Endothelial cell of umbilical vein (primary cell): ENCODE measurements at regions of chr12 and their contacts with region 1.

Region 1: GRCh38 chr12:92539113-92539749 is 163.6 kb upstream of the PLEKHG7 start:
- DNase-seq: peak; percentile 95
- H3K4me3 ChIP-seq: no peak overlapping the region
- H3K27ac ChIP-seq: peak overlapping the region; percentile 70
- H3K4me1 ChIP-seq: peaks cover 32% of the 10 kb centered on the region
- H3K27me3 ChIP-seq: no peaks in the 10 kb centered on the region
- CTCF ChIP-seq: no peak
- POLR2A ChIP-seq: no peak

Region 2: DNA sequence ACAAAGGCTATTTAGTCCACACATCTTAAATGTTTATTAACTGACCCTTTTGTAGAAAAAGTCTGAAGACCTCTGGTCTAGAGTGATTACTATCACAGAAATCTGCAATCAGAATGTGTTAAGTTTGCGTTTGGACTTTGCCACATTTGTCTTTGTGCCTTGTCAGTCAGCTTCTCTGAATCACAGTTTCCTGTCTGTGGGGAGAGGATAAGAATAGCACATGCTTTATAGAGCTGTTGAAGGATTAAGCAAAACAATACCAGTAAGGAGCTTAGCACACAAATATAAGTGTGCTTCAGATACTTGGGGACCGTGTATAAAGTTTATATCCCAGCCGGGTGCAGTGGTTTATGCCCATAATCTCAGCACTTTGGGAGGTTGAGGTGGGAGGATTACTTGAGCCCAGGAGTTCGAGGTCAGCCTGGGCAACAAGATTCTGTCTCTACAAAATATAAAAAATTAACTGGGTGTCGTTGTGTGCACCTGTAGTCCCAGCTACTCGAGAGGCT is 330.6 kb before region 1 on chr12:
- CTCF ChIA-PET with region 1: no interaction called
- POLR2A ChIA-PET with region 1: no interaction called
- dilution Hi-C with region 1: no loop called
- intact Hi-C with region 1: loop called (anchors 1 kb)
- DNase-seq: peak; percentile 97
- H3K4me3 ChIP-seq: peak overlapping the region in 1 of 3 experiments; percentile 47
- H3K27ac ChIP-seq: peak overlapping the region; percentile 82
- H3K4me1 ChIP-seq: peaks cover 13% of the 10 kb centered on the region
- H3K27me3 ChIP-seq: no peaks in the 10 kb centered on the region
- CTCF ChIP-seq: no peak
- POLR2A ChIP-seq: no peak

Region 3: DNA sequence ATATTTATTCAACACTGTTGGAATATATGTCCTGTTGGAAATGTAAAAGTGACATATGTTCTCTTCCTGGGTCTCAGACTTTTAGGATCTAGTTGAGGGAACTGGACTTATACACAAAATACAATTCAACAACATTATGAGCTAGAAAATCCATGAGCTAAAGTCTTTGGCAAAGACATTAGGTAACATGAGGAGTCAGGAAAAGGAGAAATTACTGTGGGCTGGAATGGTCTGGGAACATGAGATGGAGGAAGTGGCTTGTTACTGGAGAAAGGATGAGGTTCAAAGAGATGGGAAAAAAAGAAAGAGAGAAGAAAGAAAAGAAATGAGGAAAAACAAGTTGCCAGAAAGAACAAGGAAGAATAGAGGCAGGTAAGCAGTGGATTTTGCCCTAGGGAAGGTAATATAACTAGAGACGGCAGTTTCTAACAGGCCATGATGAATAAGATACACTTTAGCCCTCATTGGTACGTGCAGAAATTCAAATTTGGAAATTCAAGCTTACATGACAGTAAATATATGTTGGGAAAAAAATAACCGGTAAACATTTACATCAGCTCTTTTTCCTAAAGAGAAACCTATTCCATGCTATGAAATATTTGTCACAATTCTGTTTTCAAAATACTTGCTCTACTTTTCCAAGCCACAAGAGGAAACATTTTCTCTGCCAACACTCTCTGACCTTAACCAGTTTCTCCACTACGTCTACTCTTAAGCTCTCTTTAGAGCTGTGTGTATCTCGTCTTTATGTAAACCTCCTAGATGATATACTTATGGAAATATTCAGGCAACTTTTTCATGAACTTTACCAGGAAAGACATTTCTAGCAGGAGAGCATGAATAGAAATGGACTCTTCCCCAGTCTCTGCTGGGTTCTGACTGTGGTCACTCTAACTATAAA is 124.8 kb before region 1 on chr12:
- CTCF ChIA-PET with region 1: no interaction called
- POLR2A ChIA-PET with region 1: no interaction called
- dilution Hi-C with region 1: no loop called
- intact Hi-C with region 1: loop called (anchors 1 kb)
- DNase-seq: peak; percentile 7
- H3K4me3 ChIP-seq: no peak overlapping the region
- H3K27ac ChIP-seq: no peak overlapping the region
- H3K4me1 ChIP-seq: peaks cover 16% of the 10 kb centered on the region
- H3K27me3 ChIP-seq: no peaks in the 10 kb centered on the region
- CTCF ChIP-seq: no peak
- POLR2A ChIP-seq: no peak

Region 4: GRCh38 chr12:92593734-92594402 is 54.6 kb after region 1 on chr12:
- CTCF ChIA-PET with region 1: no interaction called
- POLR2A ChIA-PET with region 1: no interaction called
- dilution Hi-C with region 1: no loop called
- intact Hi-C with region 1: loop called (anchors 2 kb)
- DNase-seq: peak; percentile 42
- H3K4me3 ChIP-seq: no peak overlapping the region
- H3K27ac ChIP-seq: peak overlapping the region; percentile 77
- H3K4me1 ChIP-seq: peaks cover 12% of the 10 kb centered on the region
- H3K27me3 ChIP-seq: no peaks in the 10 kb centered on the region
- CTCF ChIP-seq: no peak
- POLR2A ChIP-seq: no peak

Region 5: DNA sequence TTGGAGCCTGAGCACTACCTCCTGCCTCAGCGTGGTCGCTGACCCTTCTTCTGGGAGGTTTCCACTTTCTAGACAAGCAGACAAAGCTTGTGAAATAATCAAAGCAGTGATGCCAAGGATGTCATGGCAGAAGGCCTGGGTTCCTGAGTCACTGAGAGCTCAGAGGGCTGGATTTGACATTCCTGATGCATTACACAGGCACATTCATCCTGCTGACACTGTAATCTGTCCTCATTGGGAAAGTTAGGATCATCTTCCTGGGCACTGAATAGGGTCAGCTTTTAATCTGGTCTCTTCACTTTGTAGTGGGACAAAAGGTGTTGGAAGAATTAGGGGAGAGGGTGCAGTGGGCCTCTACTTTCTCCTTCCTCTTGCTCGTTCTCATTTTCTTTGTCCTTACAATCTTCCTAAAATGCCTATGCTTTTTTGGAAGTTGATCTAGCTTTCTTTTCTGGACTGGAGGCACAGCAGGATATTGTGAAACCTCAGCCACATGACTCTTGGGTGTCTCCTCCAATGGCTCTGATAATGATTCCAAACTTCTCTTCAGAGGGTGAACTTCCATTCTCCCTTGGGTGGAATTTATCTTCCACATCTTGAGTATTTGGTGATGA is 360.3 kb after region 1 on chr12:
- CTCF ChIA-PET with region 1: no interaction called
- POLR2A ChIA-PET with region 1: no interaction called
- dilution Hi-C with region 1: no loop called
- intact Hi-C with region 1: no loop called
- DNase-seq: peak; percentile 87
- H3K4me3 ChIP-seq: no peak overlapping the region
- H3K27ac ChIP-seq: peak overlapping the region; percentile 76
- H3K4me1 ChIP-seq: peaks cover 22% of the 10 kb centered on the region
- H3K27me3 ChIP-seq: no peaks in the 10 kb centered on the region
- CTCF ChIP-seq: no peak
- POLR2A ChIP-seq: no peak